Activated T-helper 1 cell treated with anti-CD3 and anti-CD28 coated beads, Interleukin-12 subunit alpha, Interleukin-12 subunit beta, Interleukin-2, Interleukin-4 antibody, amounts not matched to agents 30 ng/mL and 10 ng/mL and 1 ng/mL, durations not matched to agents 14 hours and 24 hours and 36 hours (primary cell): ENCODE measurements at regions of chr1 and their contacts with region 1.

Region 1: DNA sequence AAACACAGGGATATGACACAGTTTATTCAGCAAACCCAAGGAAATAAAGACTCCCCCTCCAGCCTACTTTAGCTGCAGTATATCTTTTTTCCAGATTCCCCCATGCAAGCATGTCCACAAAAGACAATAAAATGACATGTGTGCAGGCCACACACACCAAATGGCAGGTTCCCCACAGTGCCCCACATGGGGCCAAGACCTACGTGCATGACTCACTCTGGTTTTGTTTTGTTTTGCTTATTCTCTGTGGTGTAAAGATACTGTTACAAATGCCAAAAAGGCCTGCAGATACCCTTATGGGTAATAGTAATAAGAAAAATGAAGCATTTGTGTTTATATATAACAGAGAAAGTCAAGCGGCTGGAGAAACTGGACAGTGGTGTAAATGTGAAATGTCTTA is 71.6 kb downstream of the RD3 start:
- DNase-seq: peak; percentile 5
- H3K4me3 Mint-ChIP-seq: no peak overlapping the region
- H3K27ac Mint-ChIP-seq: peak overlapping the region; percentile 6
- H3K4me1 Mint-ChIP-seq: peaks cover 28% of the 10 kb centered on the region
- H3K27me3 Mint-ChIP-seq: peaks cover under 1% of the 10 kb centered on the region

Region 2: DNA sequence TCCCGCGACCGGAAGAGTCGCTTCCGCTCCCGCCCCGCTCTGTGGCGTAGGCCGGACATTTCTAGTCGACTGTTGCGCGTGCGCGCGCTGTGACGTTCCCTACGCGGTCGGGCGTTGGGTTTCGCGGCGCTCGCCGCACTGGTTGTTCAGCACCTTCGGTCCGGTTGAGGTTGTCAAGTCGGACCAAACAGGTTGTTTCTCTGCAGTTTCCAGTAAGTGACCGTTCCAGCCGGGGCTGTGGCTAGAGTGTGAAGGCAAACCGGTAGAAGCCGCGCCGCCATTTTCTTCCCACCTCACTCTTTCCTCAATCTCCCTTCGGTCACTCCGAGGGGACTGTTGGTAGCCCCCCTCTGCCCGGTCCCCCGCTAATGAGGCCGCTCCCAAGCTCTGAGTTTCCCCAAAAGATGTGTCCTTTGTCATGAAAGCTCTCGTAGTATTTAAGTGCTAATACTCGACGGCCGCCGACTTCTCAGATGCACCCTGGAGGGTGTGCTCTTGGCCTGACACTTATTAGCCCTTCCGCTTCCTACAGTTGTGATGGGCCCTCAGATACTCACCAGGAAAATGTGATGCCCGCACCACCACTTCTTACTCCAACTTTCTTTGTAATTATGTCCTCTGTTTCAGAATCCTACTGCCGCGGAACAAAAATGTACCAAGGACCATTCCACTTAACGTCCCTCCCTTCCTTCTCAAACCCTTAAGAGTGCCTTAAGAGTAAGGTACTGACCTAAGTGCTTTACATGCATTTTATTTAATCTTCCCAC is 37.5 kb before region 1 on chr1:
- intact Hi-C with region 1: loop called (anchors 1 kb)
- DNase-seq: peak; percentile 77
- H3K4me3 Mint-ChIP-seq: peak overlapping the region; percentile 91
- H3K27ac Mint-ChIP-seq: peak overlapping the region; percentile 89
- H3K4me1 Mint-ChIP-seq: peaks cover 51% of the 10 kb centered on the region
- H3K27me3 Mint-ChIP-seq: peaks cover 8% of the 10 kb centered on the region

Region 3: GRCh38 chr1:211654838-211655787 is 234.7 kb after region 1 on chr1:
- intact Hi-C with region 1: loop called (anchors 5 kb)
- DNase-seq: peak; percentile 63
- H3K4me3 Mint-ChIP-seq: no peak overlapping the region
- H3K27ac Mint-ChIP-seq: no peak overlapping the region
- H3K4me1 Mint-ChIP-seq: peaks cover 6% of the 10 kb centered on the region
- H3K27me3 Mint-ChIP-seq: peaks cover 3% of the 10 kb centered on the region